Naive thymus-derived CD8-positive, alpha-beta T cell (primary cell): ENCODE measurements at regions of chr17 and their contacts with region 1.

Region 1: DNA sequence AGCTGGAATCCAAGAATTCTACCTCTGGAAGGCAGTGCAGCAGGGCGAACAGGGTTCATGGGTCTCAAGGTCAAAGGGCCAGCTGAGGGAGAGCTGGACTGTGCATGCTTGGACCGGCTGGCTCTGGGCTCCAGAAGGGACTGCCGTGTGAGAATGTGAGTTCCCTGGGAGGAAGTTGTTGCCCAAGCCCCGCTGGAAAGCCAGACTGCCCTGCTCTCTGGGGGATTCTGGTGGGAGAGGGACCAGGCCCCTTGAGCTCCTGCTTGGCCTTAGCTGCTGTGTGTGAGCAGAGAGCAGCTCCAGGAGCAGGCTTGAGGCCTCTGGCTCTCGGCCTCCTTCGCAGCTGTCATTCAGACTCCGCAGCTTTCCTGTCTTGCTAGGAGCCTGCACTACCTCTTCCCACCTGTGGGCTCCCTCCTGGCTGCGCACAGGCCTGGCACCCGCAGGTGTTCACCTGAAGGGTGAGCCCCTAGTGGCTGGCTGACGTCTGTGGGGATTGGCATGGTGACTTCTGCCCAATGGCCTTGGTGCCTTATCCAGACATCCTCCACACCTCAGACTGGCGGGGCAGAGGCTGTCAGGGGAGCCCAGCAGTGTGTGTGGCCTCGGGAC is 84.8 kb downstream of the NT5M start:
- DNase-seq: peak in 2 of 10 donors; percentile 21 to 24
- ATAC-seq: no peak
- H3K4me3 Mint-ChIP-seq: no peak overlapping the region
- H3K27ac Mint-ChIP-seq: no peak overlapping the region
- H3K4me1 Mint-ChIP-seq: peaks cover 18 to 25% (median 20%) of the 10 kb centered on the region in 4 donors
- H3K27me3 Mint-ChIP-seq: peaks cover 0 to 3% (median 0%) of the 10 kb centered on the region in 5 donors

Region 2: DNA sequence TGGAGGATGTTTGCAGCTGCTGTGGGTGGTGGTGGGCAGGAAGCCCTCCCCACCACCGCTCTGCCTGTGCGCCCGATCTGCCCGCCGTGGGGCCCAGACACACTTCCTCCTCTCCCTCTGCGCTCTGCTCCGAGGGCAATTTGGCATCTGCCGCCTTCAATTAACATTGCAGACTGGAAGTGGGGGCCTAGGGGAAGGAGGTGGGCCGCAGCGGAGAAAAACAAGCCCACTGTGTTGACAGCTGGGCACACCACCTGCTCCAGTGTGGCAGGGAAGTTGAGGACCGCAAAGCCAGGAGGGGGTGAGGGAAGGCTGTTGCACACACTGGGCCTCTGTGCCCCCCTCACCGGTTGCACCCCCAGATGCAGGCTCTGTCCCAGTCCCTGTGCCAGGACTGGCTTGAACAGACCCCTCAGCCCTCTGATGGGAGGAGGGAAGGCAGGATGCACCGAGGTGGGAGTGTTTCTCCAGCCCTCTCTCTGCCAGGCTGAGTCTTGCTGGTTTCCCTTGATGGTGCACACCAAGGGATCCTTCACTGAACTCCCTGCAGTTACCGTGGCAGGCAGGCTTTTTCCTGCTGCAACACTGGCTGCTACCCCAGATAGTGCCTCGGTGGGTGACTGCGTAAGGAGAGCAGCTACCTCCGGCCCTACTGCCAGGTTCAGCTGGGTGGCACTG is 16.1 kb after region 1 on chr17:
- POLR2A ChIA-PET with region 1: interaction called, 51 read pairs
- DNase-seq: peak; percentile 20 to 75 (median 60)
- ATAC-seq: peak; percentile 96 to 98
- H3K4me3 Mint-ChIP-seq: peak overlapping the region; percentile 61 to 88 (median 82)
- H3K27ac Mint-ChIP-seq: peak overlapping the region; percentile 88 to 96 (median 92)
- H3K4me1 Mint-ChIP-seq: peaks cover 43 to 89% (median 83%) of the 10 kb centered on the region in 4 donors
- H3K27me3 Mint-ChIP-seq: no peaks in the 10 kb centered on the region

Region 3: DNA sequence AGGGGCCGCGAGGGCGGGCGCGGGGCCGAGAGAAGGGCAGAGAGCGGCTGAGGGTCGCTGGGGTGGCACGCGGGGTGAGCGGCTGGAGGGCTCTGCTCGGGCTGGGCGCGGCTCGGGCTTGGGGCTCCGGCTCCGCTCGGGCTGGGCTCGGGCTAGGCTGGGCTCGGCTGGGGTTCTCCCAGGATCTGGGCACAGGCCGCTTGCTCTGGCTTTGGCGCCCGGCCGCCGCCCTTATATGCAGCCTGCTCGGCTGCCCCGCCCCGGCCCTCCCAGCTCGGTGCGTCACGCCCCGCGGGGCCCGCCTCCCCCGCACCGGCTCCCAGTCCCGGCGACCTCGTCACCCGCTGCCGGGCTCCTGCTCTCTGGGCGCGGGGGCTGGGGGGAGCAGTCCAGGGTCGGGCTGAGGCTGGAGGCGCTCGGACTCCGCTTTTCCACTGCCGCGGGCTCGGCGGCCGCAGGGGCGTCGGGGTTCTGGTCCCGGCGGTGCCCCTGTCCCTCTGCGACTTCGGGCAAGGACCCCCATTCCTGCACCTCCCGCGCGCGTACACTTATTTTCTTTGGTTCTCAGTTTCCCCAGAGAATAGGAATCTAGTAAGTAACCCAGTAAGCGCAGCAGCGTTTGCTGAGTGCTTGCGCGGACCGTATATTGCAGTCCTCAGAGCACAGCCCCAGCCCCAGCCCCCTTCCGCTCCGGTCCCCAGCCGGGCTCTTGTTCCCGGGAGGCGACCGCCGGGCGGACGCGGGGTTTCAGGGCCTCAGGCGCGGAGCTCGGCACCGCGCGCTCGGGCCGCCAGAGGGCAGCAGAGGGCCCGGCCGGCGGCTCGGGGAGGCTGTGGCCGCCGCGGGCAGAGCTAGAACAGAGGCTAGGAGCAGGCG is 108.5 kb after region 1 on chr17 and contains the start of gene RASD1:
- POLR2A ChIA-PET with region 1: interaction called, 15 read pairs
- DNase-seq: peak; percentile 58 to 81 (median 78)
- ATAC-seq: peak; percentile 80 to 82
- H3K4me3 Mint-ChIP-seq: peak within 1 kb of the TSS; percentile 65 to 95 (median 85)
- H3K27ac Mint-ChIP-seq: peak within 1 kb of the TSS in 4 of 10 donors; percentile 34 to 90 (median 66)
- H3K4me1 Mint-ChIP-seq: peaks cover 6 to 19% (median 14%) of the 10 kb centered on the region in 4 donors
- H3K27me3 Mint-ChIP-seq: peaks cover 2 to 9% (median 7%) of the 10 kb centered on the region in 5 donors
- polyA plus RNA-seq, gene RASD1: 0.23 to 0.54 (median 0.35) TPM

Region 4: GRCh38 chr17:18087610-18088491 is 699.9 kb after region 1 on chr17 and contains the start of gene DRG2:
- POLR2A ChIA-PET with region 1: interaction called, 10 read pairs
- DNase-seq: peak; percentile 73 to 95 (median 88)
- ATAC-seq: peak; percentile 92 to 93
- H3K4me3 Mint-ChIP-seq: peak within 1 kb of the TSS; percentile 98 to 100 (median 99)
- H3K27ac Mint-ChIP-seq: peak within 1 kb of the TSS; percentile 98 to 100 (median 99)
- H3K4me1 Mint-ChIP-seq: peaks cover 15 to 38% (median 27%) of the 10 kb centered on the region in 4 donors
- H3K27me3 Mint-ChIP-seq: no peaks in the 10 kb centered on the region
- polyA plus RNA-seq, gene DRG2: 38.8 to 45.2 (median 45.2) TPM